CD4-positive, alpha-beta memory T cell (primary cell): ENCODE measurements at regions of chr12 and their contacts with region 1.

Region 1: GRCh38 chr12:70719672-70720420 is 82.6 kb upstream of the PTPRB start:
- DNase-seq: peak in 3 of 5 donors; percentile 11 to 31 (median 12)
- H3K4me3 ChIP-seq: no peak overlapping the region
- H3K4me3 Mint-ChIP-seq: peak overlapping the region in 7 of 8 donors; percentile 28 to 80 (median 70)
- H3K27ac ChIP-seq: no peak overlapping the region
- H3K27ac Mint-ChIP-seq: no peak overlapping the region
- H3K4me1 ChIP-seq: peaks cover 5% of the 10 kb centered on the region
- H3K4me1 Mint-ChIP-seq: peaks cover 0 to 8% (median 4%) of the 10 kb centered on the region in 4 donors
- H3K27me3 ChIP-seq: no peaks in the 10 kb centered on the region
- H3K27me3 Mint-ChIP-seq: peaks cover 2 to 4% of the 10 kb centered on the region in 2 donors

Region 2: DNA sequence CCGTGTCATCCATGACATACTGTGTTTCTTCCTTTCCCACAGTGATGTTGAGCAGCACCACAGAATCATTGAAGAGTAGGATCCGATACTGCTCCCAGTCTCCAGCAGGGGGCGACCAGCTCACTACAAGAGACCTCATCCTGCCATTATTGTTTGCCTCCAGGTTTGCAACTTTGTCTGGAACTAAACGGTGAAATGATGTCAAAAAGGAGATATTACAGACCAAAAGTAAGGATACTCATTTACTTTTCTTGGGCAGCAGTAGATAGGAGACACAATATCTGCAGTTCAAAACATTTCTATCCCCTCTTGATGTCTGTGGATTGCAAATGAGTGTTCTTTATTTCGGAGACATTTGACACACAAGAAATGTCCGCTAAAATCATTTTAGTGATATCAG is 129.8 kb before region 1 on chr12:
- CTCF ChIA-PET with region 1: no interaction called
- POLR2A ChIA-PET with region 1: no interaction called
- intact Hi-C with region 1: loop called (anchors 5 kb)
- DNase-seq: peak; percentile 23 to 56 (median 39)
- H3K4me3 ChIP-seq: no peak overlapping the region
- H3K4me3 Mint-ChIP-seq: peak overlapping the region in 1 of 8 donors; percentile 7
- H3K27ac ChIP-seq: no peak overlapping the region
- H3K27ac Mint-ChIP-seq: no peak overlapping the region
- H3K4me1 ChIP-seq: no peaks in the 10 kb centered on the region
- H3K4me1 Mint-ChIP-seq: no peaks in the 10 kb centered on the region
- H3K27me3 ChIP-seq: no peaks in the 10 kb centered on the region
- H3K27me3 Mint-ChIP-seq: peaks cover 8 to 17% of the 10 kb centered on the region in 2 donors

Region 3: GRCh38 chr12:70692681-70693288 is 27.1 kb before region 1 on chr12:
- CTCF ChIA-PET with region 1: no interaction called
- POLR2A ChIA-PET with region 1: no interaction called
- intact Hi-C with region 1: no loop called
- DNase-seq: no peak
- H3K4me3 ChIP-seq: no peak overlapping the region
- H3K4me3 Mint-ChIP-seq: no peak overlapping the region
- H3K27ac ChIP-seq: no peak overlapping the region
- H3K27ac Mint-ChIP-seq: no peak overlapping the region
- H3K4me1 ChIP-seq: no peaks in the 10 kb centered on the region
- H3K4me1 Mint-ChIP-seq: no peaks in the 10 kb centered on the region
- H3K27me3 ChIP-seq: no peaks in the 10 kb centered on the region
- H3K27me3 Mint-ChIP-seq: no peaks in the 10 kb centered on the region

Region 4: GRCh38 chr12:70744133-70744532 is 24.3 kb after region 1 on chr12:
- CTCF ChIA-PET with region 1: no interaction called
- POLR2A ChIA-PET with region 1: no interaction called
- intact Hi-C with region 1: no loop called
- DNase-seq: no peak
- H3K4me3 ChIP-seq: no peak overlapping the region
- H3K4me3 Mint-ChIP-seq: no peak overlapping the region
- H3K27ac ChIP-seq: no peak overlapping the region
- H3K27ac Mint-ChIP-seq: no peak overlapping the region
- H3K4me1 ChIP-seq: no peaks in the 10 kb centered on the region
- H3K4me1 Mint-ChIP-seq: no peaks in the 10 kb centered on the region
- H3K27me3 ChIP-seq: no peaks in the 10 kb centered on the region
- H3K27me3 Mint-ChIP-seq: peaks cover 6 to 12% of the 10 kb centered on the region in 2 donors

Region 5: DNA sequence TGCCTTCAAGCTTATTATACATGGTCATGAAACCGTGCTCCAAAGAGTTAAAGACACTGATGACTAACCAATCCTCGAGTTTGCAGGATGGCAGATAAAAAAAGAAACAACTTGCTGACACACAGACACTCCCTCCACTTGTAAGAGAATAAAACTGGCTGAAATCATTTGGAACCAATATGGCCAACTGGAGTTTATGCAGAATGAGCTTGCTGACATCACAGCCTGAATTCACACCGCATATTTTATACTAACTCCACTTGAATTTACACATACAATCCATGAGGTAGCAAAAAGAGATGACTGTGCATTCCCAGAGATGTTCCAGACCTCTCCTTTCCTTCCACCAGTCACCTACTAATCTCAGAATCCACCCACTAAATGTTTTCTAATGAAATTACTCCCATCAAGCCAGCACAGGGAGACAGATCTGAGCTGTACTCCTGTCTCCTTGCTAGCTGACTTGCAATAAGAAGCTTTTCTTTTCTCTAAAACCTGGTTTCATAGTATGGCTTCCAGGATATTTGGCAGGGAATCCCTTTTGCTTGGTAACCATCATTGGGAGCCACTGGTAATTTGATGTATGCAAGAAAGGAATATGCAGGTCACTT is 216.5 kb after region 1 on chr12:
- CTCF ChIA-PET with region 1: no interaction called
- POLR2A ChIA-PET with region 1: no interaction called
- intact Hi-C with region 1: no loop called
- DNase-seq: no peak
- H3K4me3 ChIP-seq: no peak overlapping the region
- H3K4me3 Mint-ChIP-seq: no peak overlapping the region
- H3K27ac ChIP-seq: no peak overlapping the region
- H3K27ac Mint-ChIP-seq: no peak overlapping the region
- H3K4me1 ChIP-seq: no peaks in the 10 kb centered on the region
- H3K4me1 Mint-ChIP-seq: no peaks in the 10 kb centered on the region
- H3K27me3 ChIP-seq: no peaks in the 10 kb centered on the region
- H3K27me3 Mint-ChIP-seq: no peaks in the 10 kb centered on the region